Lower leg skin (tissue), 4 donors: ENCODE measurements at regions of chr2 and their contacts with region 1.

Region 1: GRCh38 chr2:158025255-158025996 is 76.2 kb upstream of the UPP2 start:
- DNase-seq: no peak
- H3K4me3 ChIP-seq: no peak overlapping the region
- CTCF ChIP-seq: no peak
- POLR2A ChIP-seq: no peak

Region 2: DNA sequence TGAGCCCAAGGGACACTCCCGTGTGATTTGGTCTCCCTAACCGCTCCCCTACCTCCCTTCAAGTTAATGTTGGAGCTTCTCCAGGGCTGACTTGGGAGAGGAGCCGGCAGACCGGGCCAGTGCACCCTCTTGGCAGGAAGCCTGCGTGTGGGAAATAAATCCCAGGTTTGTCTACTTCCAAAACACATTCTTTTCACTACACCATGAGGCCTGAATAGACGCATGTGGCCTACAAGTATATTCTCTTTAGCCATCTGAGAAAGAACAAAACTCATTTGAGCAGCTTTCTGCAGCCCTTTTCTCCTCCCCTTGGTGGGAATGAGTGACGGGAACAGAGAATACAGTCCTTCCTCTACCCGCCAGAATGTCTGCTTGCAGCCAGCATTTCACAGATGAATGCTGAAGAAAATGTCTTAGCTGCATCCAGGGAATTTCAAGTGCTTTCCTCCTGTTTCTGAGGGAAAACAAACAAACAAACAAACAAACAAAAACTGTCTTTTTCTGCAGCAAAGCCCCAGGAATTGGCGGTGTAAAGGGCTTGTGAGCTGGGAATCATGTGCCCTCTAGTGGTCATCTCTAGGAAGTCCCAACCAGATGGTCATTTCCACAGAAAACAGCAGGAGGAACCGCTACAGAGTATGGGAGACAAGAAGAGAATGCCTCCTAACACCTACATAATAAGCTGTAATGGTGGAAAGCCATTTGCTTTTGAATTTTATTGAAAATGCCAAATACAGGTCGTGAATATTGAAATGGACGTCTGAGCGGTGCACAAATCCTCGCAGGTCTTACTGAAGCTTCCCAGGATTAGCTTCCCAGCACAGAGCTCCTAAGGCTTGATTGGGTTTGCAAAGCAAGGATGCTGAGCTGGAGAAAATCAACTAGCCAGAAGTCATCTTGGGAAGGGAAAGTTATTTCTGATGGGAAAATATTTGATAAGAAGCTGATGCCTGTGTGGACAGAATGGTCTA is 728.5 kb after region 1 on chr2:
- intact Hi-C with region 1: loop called (anchors 5 kb)
- DNase-seq: no peak
- H3K4me3 ChIP-seq: no peak overlapping the region
- CTCF ChIP-seq: peak in 1 of 3 donors; percentile 69
- POLR2A ChIP-seq: no peak